ENCODE measurements at regions of chr12 and their contacts with region 1.

Region 1: DNA sequence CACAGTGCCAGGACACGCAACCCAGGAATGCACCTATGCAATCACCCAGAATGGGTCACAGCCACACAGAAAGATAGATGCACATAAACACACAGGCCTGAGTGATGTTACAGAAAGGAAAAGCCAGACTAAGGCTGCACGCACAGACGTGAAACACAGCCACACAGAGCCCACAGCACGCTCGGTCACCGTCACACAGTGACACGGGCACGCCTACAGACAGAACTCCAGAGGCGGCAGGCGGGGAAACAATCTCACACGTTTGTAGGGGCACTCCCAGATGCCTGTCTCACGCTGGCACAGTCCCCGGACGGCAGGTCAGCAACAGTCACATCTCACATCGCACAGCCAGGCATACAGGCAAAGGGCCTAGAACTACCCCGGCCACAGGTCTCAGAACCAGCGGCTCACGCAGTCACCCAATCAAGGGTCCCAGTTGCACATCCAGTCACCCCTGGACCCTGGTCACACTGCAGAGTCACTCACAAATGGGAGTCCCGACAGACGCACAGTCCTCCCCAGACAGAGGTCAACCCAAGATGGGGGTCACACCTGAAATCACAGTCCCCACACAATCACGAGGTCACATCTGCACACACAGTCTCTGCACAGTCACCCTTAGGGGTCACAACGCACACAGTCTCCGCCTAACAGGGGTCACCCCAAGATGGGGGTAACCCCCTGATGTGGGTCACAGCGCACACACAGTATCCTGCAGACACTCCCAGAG is 790 bp downstream of the SSH1 start:
- DNase-seq: peak; percentile 49
- H3K4me3 ChIP-seq: peak overlapping the region; percentile 0 to 74 (median 60)
- H3K27ac ChIP-seq: peak overlapping the region; percentile 98
- H3K4me1 ChIP-seq: peaks cover 46% of the 10 kb centered on the region
- H3K27me3 ChIP-seq: no peaks in the 10 kb centered on the region
- CTCF ChIP-seq: no peak
- POLR2A ChIP-seq: peak; percentile 22

Region 2: GRCh38 chr12:108562348-108563135 is 294.1 kb before region 1 on chr12 and contains the start of gene ISCU:
- CTCF ChIA-PET with region 1: interaction called, 3 read pairs
- POLR2A ChIA-PET with region 1: interaction called, 3 read pairs
- dilution Hi-C with region 1: no loop called
- intact Hi-C with region 1: loop called (anchors 1 kb)
- DNase-seq: peak; percentile 96
- H3K4me3 ChIP-seq: peak within 1 kb of the TSS; percentile 78 to 95 (median 86)
- H3K27ac ChIP-seq: peak within 1 kb of the TSS; percentile 83
- H3K4me1 ChIP-seq: peaks cover 34% of the 10 kb centered on the region
- H3K27me3 ChIP-seq: no peaks in the 10 kb centered on the region
- CTCF ChIP-seq: no peak
- POLR2A ChIP-seq: peak; percentile 94
- total RNA-seq, gene ISCU: 74.8 and 75.0 TPM in 2 replicates

Region 3: DNA sequence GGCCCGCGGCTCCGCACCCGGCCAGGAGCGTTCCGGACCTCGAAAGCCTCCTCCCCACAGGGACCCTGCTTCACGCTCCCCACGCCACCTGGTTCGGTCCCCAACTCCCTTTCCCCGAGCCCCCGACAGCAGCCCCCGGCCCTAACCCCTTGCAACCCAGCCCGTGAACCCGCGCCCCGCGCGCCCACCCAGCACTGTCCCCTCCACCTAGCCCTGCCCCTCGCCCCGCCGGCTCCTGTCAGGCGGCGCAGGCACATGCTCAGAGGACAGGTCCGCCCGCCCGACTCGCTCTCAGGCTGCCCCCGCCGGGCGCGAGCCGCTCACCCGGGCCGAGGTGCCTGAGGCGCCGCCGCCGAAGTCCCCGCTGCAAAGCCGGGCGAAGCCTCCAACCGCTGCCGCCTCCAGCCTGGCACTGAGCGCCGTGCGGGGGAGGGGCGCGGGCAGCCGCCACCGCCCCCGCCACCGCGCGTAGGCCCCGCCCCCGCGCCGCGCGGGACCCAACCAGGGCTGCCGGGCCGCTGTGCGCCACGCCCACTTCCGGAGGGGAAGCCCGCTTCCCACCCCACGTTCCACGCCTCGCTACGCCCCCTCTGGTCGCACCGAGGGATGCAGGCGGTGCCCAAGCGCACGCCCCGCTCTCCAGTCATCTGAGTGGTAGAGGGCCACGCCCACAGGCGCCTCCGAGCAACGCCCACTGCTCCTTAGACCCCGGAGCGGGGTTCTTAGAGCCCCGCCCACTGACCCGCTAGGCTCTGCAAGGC is 125.3 kb before region 1 on chr12 and contains the start of gene CORO1C:
- CTCF ChIA-PET with region 1: no interaction called
- POLR2A ChIA-PET with region 1: no interaction called
- dilution Hi-C with region 1: no loop called
- intact Hi-C with region 1: loop called (anchors 1 kb)
- DNase-seq: peak; percentile 99
- H3K4me3 ChIP-seq: peak within 1 kb of the TSS; percentile 57 to 91 (median 76)
- H3K27ac ChIP-seq: peak within 1 kb of the TSS; percentile 92
- H3K4me1 ChIP-seq: peaks cover 29% of the 10 kb centered on the region
- H3K27me3 ChIP-seq: no peaks in the 10 kb centered on the region
- CTCF ChIP-seq: peak; percentile 89 to 95
- POLR2A ChIP-seq: peak; percentile 93
- total RNA-seq, gene CORO1C: 212 and 240 TPM in 2 replicates

Region 4: GRCh38 chr12:108833355-108833733 is 23.2 kb before region 1 on chr12:
- CTCF ChIA-PET with region 1: interaction called, 62 read pairs
- POLR2A ChIA-PET with region 1: interaction called, 16 read pairs
- dilution Hi-C with region 1: no loop called
- intact Hi-C with region 1: loop called (anchors 1 kb)
- DNase-seq: peak; percentile 81
- H3K4me3 ChIP-seq: no peak overlapping the region
- H3K27ac ChIP-seq: peak overlapping the region; percentile 97
- H3K4me1 ChIP-seq: peaks cover 67% of the 10 kb centered on the region
- H3K27me3 ChIP-seq: no peaks in the 10 kb centered on the region
- CTCF ChIP-seq: no peak
- POLR2A ChIP-seq: no peak

Region 5: GRCh38 chr12:108875682-108876361 is 19.2 kb after region 1 on chr12:
- CTCF ChIA-PET with region 1: no interaction called
- POLR2A ChIA-PET with region 1: no interaction called
- dilution Hi-C with region 1: no loop called
- intact Hi-C with region 1: no loop called
- DNase-seq: no peak
- H3K4me3 ChIP-seq: no peak overlapping the region
- H3K27ac ChIP-seq: no peak overlapping the region
- H3K4me1 ChIP-seq: no peaks in the 10 kb centered on the region
- H3K27me3 ChIP-seq: no peaks in the 10 kb centered on the region
- CTCF ChIP-seq: no peak
- POLR2A ChIP-seq: no peak

Region 6: GRCh38 chr12:108939594-108939993 is 83.0 kb after region 1 on chr12:
- CTCF ChIA-PET with region 1: no interaction called
- POLR2A ChIA-PET with region 1: no interaction called
- dilution Hi-C with region 1: no loop called
- intact Hi-C with region 1: no loop called
- DNase-seq: peak; percentile 10
- H3K4me3 ChIP-seq: no peak overlapping the region
- H3K27ac ChIP-seq: no peak overlapping the region
- H3K4me1 ChIP-seq: no peaks in the 10 kb centered on the region
- H3K27me3 ChIP-seq: peaks cover 0 to 2% of the 10 kb centered on the region in 2 experiments
- CTCF ChIP-seq: no peak
- POLR2A ChIP-seq: no peak

Region 7: GRCh38 chr12:108950991-108951739 is 94.6 kb after region 1 on chr12:
- CTCF ChIA-PET with region 1: interaction called, 15 read pairs
- POLR2A ChIA-PET with region 1: no interaction called
- dilution Hi-C with region 1: no loop called
- intact Hi-C with region 1: loop called (anchors 1 kb)
- DNase-seq: peak; percentile 80
- H3K4me3 ChIP-seq: no peak overlapping the region
- H3K27ac ChIP-seq: no peak overlapping the region
- H3K4me1 ChIP-seq: no peaks in the 10 kb centered on the region
- H3K27me3 ChIP-seq: no peaks in the 10 kb centered on the region
- CTCF ChIP-seq: peak; percentile 74 to 80
- POLR2A ChIP-seq: no peak